PC-9 (cell line): ENCODE measurements at regions of chr16 and their contacts with region 1.

Region 1: GRCh38 chr16:67806428-67807147 is at the starts of genes RANBP10 and TSNAXIP1:
- DNase-seq: peak; percentile 96 to 98
- H3K4me3 ChIP-seq: peak within 1 kb of the TSS; percentile 86
- H3K27ac ChIP-seq: no peak within 1 kb of the TSS
- H3K4me1 ChIP-seq: peaks cover 14% of the 10 kb centered on the region
- H3K27me3 ChIP-seq: no peaks in the 10 kb centered on the region
- CTCF ChIP-seq: no peak
- total RNA-seq, gene RANBP10: 16.1 and 21.0 TPM in 2 replicates
- total RNA-seq, gene TSNAXIP1: 1.9 and 2.2 TPM in 2 replicates

Region 2: DNA sequence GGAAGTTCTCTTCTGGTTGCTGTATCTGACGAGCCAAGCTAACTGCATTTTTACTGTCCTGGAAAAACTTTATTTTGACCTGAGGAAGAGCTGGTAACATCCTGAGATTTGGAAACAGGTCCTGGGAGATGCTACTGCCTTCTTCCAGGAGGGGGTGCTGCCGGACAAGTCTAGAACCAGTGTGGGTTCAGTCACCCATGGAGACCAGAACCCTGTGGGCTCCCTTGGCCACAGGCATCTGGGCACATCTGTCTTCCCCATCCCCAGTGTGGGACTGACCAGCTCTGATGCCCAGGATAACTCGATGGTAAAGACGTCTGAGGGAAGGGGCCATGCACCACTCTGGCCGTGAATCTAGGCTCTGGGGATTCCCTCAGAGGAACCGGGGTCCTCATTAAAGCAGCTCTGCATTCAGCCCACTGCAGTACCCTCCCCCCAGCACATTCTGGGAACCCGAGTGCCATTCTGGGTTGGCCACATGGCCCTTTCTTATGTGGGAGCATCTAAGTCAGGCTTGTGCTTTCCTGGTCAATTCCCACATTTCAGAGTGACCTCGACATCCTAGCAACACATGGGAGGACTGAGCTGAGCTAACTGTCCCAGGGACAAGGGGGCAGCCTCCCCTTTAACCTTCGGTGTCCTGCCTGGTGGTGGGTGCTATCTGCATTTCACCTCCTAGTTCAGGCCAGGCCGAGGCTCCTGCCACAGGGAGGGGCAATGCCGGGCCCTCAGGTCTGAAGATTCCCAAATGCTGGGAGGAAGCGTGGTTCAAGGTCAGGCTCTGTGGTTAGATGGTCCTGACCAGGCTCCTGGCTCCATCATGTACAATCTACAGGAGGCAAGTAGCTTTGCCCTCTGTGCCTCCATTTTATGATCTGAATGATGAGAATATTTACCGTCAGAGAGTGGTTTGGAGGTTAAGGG is 133.6 kb before region 1 on chr16:
- CTCF ChIA-PET with region 1: no interaction called
- POLR2A ChIA-PET with region 1: interaction called, 6 read pairs
- intact Hi-C with region 1: loop called (anchors 2 kb)
- DNase-seq: peak; percentile 39 to 67
- H3K4me3 ChIP-seq: no peak overlapping the region
- H3K27ac ChIP-seq: no peak overlapping the region
- H3K4me1 ChIP-seq: peaks cover 25% of the 10 kb centered on the region
- H3K27me3 ChIP-seq: no peaks in the 10 kb centered on the region
- CTCF ChIP-seq: peak; percentile 84

Region 3: DNA sequence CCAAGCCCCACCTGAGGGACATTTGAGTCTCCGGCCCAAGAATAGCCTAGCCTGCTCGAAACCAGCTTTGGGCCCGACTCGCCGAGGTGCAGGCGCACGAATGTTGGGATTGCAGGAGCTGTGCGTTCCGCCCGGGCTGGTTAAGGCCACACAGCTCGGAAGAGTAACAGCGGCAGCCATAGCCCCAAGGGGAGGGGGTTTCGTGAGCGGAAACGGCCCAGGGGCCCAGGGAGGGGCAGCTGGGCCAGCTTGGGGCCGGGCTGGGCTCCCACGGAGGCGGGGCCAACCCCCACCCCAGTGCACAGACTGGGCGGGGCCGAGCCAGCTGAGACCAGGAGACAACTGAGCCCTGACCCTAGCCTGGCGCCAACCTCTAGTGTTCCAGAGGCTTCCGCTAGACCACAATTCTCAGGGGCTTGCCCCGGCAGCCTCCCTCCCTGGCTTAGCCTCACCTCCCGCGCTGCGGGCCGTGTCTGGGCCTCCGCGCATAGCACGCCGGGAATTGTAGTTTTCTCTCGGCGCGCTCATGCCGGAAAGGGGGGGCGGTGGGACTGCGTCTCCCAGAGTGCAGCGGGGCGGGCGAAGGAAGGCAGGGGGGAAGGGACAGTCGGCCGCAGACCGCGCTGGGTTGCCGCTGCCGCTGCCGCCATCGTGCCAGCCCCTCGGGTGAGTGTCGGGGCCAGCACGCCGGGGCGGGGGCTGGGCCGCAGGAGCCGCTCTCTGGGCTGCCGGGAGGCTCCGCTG is 39.9 kb after region 1 on chr16 and contains the start of gene NUTF2:
- CTCF ChIA-PET with region 1: no interaction called
- POLR2A ChIA-PET with region 1: no interaction called
- intact Hi-C with region 1: loop called (anchors 5 kb)
- DNase-seq: peak; percentile 83 to 96
- H3K4me3 ChIP-seq: peak within 1 kb of the TSS; percentile 100
- H3K27ac ChIP-seq: peak within 1 kb of the TSS; percentile 70
- H3K4me1 ChIP-seq: peaks cover 45% of the 10 kb centered on the region
- H3K27me3 ChIP-seq: no peaks in the 10 kb centered on the region
- CTCF ChIP-seq: no peak
- total RNA-seq, gene NUTF2: 94.2 and 147 TPM in 2 replicates

Region 4: GRCh38 chr16:67892899-67893742 is 86.5 kb after region 1 on chr16 and contains the start of gene PSKH1:
- CTCF ChIA-PET with region 1: no interaction called
- POLR2A ChIA-PET with region 1: interaction called, 20 read pairs
- intact Hi-C with region 1: no loop called
- DNase-seq: peak; percentile 88 to 91
- H3K4me3 ChIP-seq: peak within 1 kb of the TSS; percentile 98
- H3K27ac ChIP-seq: peak within 1 kb of the TSS; percentile 31
- H3K4me1 ChIP-seq: peaks cover 14% of the 10 kb centered on the region
- H3K27me3 ChIP-seq: no peaks in the 10 kb centered on the region
- CTCF ChIP-seq: no peak
- total RNA-seq, gene PSKH1: 25.8 and 28.4 TPM in 2 replicates